Kidney (tissue), 22 donors: ENCODE measurements at regions of chr6 and their contacts with region 1.

Region 1: DNA sequence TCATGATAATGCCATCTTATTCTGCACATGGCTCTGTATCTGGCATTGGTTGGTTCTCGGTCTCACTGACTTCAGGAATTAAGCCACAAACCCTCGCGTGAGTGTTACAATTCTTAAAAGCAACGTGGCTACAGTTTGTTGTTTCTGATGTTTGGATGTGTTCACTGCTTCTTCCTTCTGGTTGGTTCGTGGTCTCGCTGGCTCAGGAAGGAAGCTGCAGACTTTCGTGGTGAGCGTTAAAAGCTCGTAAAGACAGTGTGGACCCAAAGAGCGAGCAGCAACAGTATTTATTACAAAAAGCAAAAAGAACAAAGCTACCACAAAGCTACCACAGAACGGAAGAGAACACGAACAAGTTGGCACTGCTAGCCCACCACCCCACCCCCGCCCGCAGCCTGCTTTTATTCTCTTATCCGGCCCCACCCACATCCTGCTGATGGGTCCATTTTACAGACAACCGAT is 51.1 kb downstream of the MYLIP start:
- DNase-seq: no peak
- H3K4me3 ChIP-seq: no peak overlapping the region
- H3K27ac ChIP-seq: no peak overlapping the region
- H3K4me1 ChIP-seq: peaks cover 2 to 17% (median 6%) of the 10 kb centered on the region in 3 donors
- H3K27me3 ChIP-seq: no peaks in the 10 kb centered on the region
- CTCF ChIP-seq: no peak

Region 2: GRCh38 chr6:15691250-15691869 is 488.6 kb before region 1 on chr6:
- intact Hi-C with region 1: loop called (anchors 10 kb)
- DNase-seq: peak; percentile 89 to 96 (median 94)
- H3K4me3 ChIP-seq: peak overlapping the region; percentile 49 to 65 (median 63)
- H3K27ac ChIP-seq: peak overlapping the region in 1 of 2 donors; percentile 29
- H3K4me1 ChIP-seq: peaks cover 0 to 14% (median 0%) of the 10 kb centered on the region in 3 donors
- H3K27me3 ChIP-seq: no peaks in the 10 kb centered on the region
- CTCF ChIP-seq: peak; percentile 100

Region 3: DNA sequence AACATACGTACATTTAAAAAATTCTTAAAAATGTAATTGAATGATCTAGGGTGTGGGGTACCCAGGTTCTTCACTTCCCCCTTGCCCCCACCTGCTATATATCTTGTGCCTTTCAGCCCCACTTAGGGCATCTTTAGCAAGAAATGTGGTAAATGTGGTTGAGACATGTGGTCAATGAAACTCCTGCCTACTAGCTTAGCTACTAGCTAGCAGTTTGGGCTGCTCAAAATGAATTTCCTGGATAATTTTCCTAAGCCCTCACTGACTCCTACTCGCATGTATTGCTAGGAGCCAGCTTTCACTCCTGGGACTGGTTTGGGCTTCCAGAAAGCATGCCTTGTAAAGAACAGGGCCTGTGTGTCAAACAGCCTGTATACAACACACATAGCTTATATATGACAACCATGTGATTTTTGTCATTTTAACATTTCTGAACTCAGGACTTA is 324.0 kb after region 1 on chr6:
- intact Hi-C with region 1: no loop called
- DNase-seq: no peak
- H3K4me3 ChIP-seq: no peak overlapping the region
- H3K27ac ChIP-seq: no peak overlapping the region
- H3K4me1 ChIP-seq: peaks cover 0 to 4% (median 0%) of the 10 kb centered on the region in 3 donors
- H3K27me3 ChIP-seq: no peaks in the 10 kb centered on the region
- CTCF ChIP-seq: no peak